ENCODE measurements at regions of chr17 and their contacts with region 1.

Region 1: GRCh38 chr17:76515274-76515949 is 14.2 kb upstream of the RHBDF2 start:
- DNase-seq: peak; percentile 72 to 99 (median 84)
- ATAC-seq: peak; percentile 82
- H3K4me3 ChIP-seq: peak overlapping the region; percentile 32 to 44
- H3K4me3 Mint-ChIP-seq: peak overlapping the region; percentile 67
- H3K27ac ChIP-seq: peak overlapping the region; percentile 85 to 92
- H3K27ac Mint-ChIP-seq: peak overlapping the region; percentile 97
- H3K4me1 ChIP-seq: peaks cover 43% of the 10 kb centered on the region
- H3K4me1 Mint-ChIP-seq: peaks cover 49% of the 10 kb centered on the region
- H3K27me3 ChIP-seq: no peaks in the 10 kb centered on the region
- H3K27me3 Mint-ChIP-seq: no peaks in the 10 kb centered on the region
- CTCF ChIP-seq: no peak

Region 2: GRCh38 chr17:76314392-76315227 is 200.8 kb before region 1 on chr17:
- CTCF ChIA-PET with region 1: no interaction called
- POLR2A ChIA-PET with region 1: no interaction called
- intact Hi-C with region 1: no loop called
- DNase-seq: no peak
- ATAC-seq: no peak
- H3K4me3 ChIP-seq: no peak overlapping the region
- H3K4me3 Mint-ChIP-seq: no peak overlapping the region
- H3K27ac ChIP-seq: no peak overlapping the region
- H3K27ac Mint-ChIP-seq: no peak overlapping the region
- H3K4me1 ChIP-seq: no peaks in the 10 kb centered on the region
- H3K4me1 Mint-ChIP-seq: no peaks in the 10 kb centered on the region
- H3K27me3 ChIP-seq: no peaks in the 10 kb centered on the region
- H3K27me3 Mint-ChIP-seq: no peaks in the 10 kb centered on the region
- CTCF ChIP-seq: no peak

Region 3: DNA sequence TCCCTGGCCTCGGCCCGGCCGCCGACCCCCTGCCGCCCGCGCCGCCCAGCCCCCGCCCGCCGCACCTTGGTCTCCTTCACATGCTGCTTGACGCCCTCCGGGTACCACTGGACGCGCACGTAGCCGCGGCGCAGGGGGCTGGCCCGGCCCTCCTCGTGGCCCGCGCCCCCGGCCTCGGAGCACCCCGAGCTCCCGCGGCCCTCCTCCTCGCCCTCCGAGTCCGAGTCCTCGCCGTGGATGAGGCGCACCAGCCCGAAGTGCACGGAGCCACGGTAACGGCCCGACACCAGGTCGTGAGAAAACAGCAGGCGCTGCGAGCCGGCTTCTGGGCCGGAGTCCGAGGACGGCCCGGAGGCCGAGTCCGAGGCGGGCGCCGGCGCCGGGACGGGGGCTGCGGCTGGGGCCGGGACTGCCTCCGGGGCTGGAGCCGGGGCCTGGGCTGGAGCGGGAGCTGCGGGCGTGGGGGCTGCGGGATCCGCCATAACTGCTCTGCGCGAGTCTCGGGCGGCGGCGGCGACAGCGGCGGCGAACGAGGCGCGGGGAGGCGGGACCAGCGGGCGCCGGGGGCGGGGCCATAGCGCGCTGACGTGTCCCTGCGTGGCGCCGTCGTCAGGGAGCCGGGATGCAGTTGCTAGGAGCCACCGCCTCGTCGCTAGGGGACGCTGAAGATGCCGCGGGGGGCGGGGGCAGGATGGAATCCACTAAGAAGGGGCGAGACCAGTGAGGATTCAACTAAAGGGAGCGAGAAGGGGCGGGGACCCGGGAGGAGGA is 62.6 kb before region 1 on chr17 and contains the start of gene UBE2O:
- CTCF ChIA-PET with region 1: interaction called, 7 read pairs
- POLR2A ChIA-PET with region 1: interaction called, 4 read pairs
- intact Hi-C with region 1: loop called (anchors 1 to 2 kb)
- DNase-seq: peak; percentile 84 to 96 (median 94)
- ATAC-seq: peak; percentile 92
- H3K4me3 ChIP-seq: peak within 1 kb of the TSS; percentile 49 to 78
- H3K4me3 Mint-ChIP-seq: peak within 1 kb of the TSS; percentile 85
- H3K27ac ChIP-seq: peak within 1 kb of the TSS; percentile 50 to 64
- H3K27ac Mint-ChIP-seq: peak within 1 kb of the TSS; percentile 78
- H3K4me1 ChIP-seq: peaks cover 22% of the 10 kb centered on the region
- H3K4me1 Mint-ChIP-seq: peaks cover 39% of the 10 kb centered on the region
- H3K27me3 ChIP-seq: no peaks in the 10 kb centered on the region
- H3K27me3 Mint-ChIP-seq: no peaks in the 10 kb centered on the region
- CTCF ChIP-seq: peak; percentile 39
- total RNA-seq, gene UBE2O: 29.8 to 32.7 TPM

Region 4: GRCh38 chr17:76492989-76493501 is 22.4 kb before region 1 on chr17:
- CTCF ChIA-PET with region 1: no interaction called
- POLR2A ChIA-PET with region 1: interaction called, 11 read pairs
- intact Hi-C with region 1: no loop called
- DNase-seq: peak in 6 of 9 experiments; percentile 19 to 78 (median 49)
- ATAC-seq: peak; percentile 38
- H3K4me3 ChIP-seq: peak overlapping the region; percentile 41 to 42
- H3K4me3 Mint-ChIP-seq: peak overlapping the region; percentile 80
- H3K27ac ChIP-seq: peak overlapping the region; percentile 60 to 91
- H3K27ac Mint-ChIP-seq: peak overlapping the region; percentile 93
- H3K4me1 ChIP-seq: peaks cover 40% of the 10 kb centered on the region
- H3K4me1 Mint-ChIP-seq: peaks cover 42% of the 10 kb centered on the region
- H3K27me3 ChIP-seq: no peaks in the 10 kb centered on the region
- H3K27me3 Mint-ChIP-seq: no peaks in the 10 kb centered on the region
- CTCF ChIP-seq: no peak

Region 5: DNA sequence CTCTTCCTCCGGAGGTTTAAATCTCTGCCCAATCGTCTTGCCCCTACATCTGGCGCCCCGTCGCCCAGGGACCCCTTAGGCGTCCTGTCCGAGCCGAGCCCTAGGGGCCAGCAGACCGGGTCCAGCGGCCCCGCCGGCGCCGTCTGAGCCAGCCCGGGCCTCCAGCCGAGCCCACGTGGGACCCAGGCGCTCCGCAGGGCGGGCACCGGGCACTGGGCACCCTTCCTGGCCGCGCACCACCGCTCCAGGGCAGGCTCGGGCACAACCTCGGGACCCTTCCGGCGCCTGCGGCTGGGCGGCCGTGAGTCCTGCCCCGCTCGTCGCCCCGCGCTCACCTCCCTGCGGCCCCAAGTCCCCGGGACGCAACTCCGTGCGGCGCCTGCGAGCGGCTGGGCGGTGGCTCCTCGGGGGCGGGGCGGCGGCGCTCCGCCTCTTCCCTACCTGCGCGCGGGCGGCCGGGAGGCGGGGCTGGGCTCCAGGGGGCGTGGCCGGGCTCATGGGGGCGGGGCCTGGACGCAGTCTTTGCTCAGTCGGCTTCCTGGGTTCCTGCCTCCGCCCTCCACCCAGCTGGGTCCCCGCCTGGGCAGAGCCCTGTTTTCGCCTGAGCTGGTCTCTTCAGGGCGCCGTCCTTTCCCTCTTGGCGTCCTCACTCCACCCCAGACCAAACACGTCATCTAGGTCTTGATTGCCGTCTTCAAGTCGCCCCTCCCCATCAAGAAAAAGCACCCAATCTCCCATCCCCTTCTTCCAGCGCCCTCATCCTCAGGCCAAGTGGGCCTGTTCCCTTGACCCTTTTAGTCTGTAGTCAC is 14.2 kb before region 1 on chr17 and contains the start of gene RHBDF2:
- CTCF ChIA-PET with region 1: interaction called, 71 read pairs
- POLR2A ChIA-PET with region 1: interaction called, 5 read pairs
- intact Hi-C with region 1: loop called in 1 of 2 experiments (anchors 1 kb)
- DNase-seq: peak; percentile 91 to 99 (median 96)
- ATAC-seq: peak; percentile 97
- H3K4me3 ChIP-seq: peak within 1 kb of the TSS; percentile 79 to 93
- H3K4me3 Mint-ChIP-seq: peak within 1 kb of the TSS; percentile 83
- H3K27ac ChIP-seq: peak within 1 kb of the TSS; percentile 73 to 85
- H3K27ac Mint-ChIP-seq: peak within 1 kb of the TSS; percentile 96
- H3K4me1 ChIP-seq: peaks cover 44% of the 10 kb centered on the region
- H3K4me1 Mint-ChIP-seq: peaks cover 47% of the 10 kb centered on the region
- H3K27me3 ChIP-seq: no peaks in the 10 kb centered on the region
- H3K27me3 Mint-ChIP-seq: no peaks in the 10 kb centered on the region
- CTCF ChIP-seq: no peak
- total RNA-seq, gene RHBDF2: 45.4 to 46.2 TPM

Region 6: DNA sequence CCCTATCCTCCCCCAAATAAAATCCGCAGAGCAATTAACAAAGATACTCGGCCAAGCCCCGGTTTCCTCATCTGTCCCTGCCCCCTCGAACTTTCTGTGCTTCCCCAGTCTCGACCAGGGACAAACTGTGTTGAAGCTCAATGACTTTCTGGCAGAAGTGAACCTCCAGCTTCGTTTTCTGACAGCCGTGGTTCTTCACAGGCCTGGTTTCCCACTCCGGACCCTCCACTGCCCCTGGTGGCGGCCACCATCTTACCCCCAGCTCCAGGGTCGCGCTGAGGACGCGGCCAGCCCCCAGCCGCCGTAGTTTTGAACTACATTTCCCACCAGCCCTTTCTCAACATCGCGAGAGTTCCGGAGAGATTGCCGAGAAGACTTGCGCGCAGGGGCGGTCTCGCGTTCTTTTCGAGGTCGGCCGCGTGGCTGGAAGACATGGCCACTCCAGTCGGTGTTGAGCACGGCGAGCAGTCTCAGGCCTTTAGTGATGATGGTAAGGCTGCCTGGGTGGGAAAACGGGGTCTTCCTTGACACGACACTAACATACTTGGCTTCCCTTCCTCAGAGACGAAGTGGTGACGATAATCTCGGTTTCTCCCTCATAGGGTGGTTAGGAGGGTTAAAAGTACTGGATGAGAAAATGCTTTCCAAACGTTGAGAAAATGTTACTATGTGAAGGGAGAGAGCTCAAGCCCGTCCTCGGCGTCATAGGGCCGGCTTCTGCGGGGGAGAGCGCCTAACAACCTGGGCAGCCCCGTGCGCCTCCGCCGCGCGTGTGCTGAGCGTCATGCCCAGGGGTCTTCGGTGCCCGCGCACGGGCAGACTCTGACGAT is 42.2 kb after region 1 on chr17:
- CTCF ChIA-PET with region 1: interaction called, 6 read pairs
- POLR2A ChIA-PET with region 1: interaction called, 6 read pairs
- intact Hi-C with region 1: loop called (anchors 1 kb)
- DNase-seq: peak; percentile 86 to 97 (median 92)
- ATAC-seq: peak; percentile 78
- H3K4me3 ChIP-seq: peak overlapping the region; percentile 70 to 75
- H3K4me3 Mint-ChIP-seq: peak overlapping the region; percentile 95
- H3K27ac ChIP-seq: peak overlapping the region; percentile 81 to 95
- H3K27ac Mint-ChIP-seq: peak overlapping the region; percentile 97
- H3K4me1 ChIP-seq: peaks cover 49% of the 10 kb centered on the region
- H3K4me1 Mint-ChIP-seq: peaks cover 63% of the 10 kb centered on the region
- H3K27me3 ChIP-seq: no peaks in the 10 kb centered on the region
- H3K27me3 Mint-ChIP-seq: no peaks in the 10 kb centered on the region
- CTCF ChIP-seq: peak; percentile 35

Region 7: GRCh38 chr17:76671123-76671911 is 155.9 kb after region 1 on chr17:
- CTCF ChIA-PET with region 1: no interaction called
- POLR2A ChIA-PET with region 1: interaction called, 12 read pairs
- intact Hi-C with region 1: loop called in 1 of 2 experiments (anchors 5 kb)
- DNase-seq: peak; percentile 96 to 100 (median 99)
- ATAC-seq: peak; percentile 97
- H3K4me3 ChIP-seq: peak overlapping the region; percentile 76 to 79
- H3K4me3 Mint-ChIP-seq: peak overlapping the region; percentile 90
- H3K27ac ChIP-seq: peak overlapping the region; percentile 71 to 90
- H3K27ac Mint-ChIP-seq: peak overlapping the region; percentile 96
- H3K4me1 ChIP-seq: peaks cover 39% of the 10 kb centered on the region
- H3K4me1 Mint-ChIP-seq: peaks cover 49% of the 10 kb centered on the region
- H3K27me3 ChIP-seq: no peaks in the 10 kb centered on the region
- H3K27me3 Mint-ChIP-seq: no peaks in the 10 kb centered on the region
- CTCF ChIP-seq: no peak

Region 8: DNA sequence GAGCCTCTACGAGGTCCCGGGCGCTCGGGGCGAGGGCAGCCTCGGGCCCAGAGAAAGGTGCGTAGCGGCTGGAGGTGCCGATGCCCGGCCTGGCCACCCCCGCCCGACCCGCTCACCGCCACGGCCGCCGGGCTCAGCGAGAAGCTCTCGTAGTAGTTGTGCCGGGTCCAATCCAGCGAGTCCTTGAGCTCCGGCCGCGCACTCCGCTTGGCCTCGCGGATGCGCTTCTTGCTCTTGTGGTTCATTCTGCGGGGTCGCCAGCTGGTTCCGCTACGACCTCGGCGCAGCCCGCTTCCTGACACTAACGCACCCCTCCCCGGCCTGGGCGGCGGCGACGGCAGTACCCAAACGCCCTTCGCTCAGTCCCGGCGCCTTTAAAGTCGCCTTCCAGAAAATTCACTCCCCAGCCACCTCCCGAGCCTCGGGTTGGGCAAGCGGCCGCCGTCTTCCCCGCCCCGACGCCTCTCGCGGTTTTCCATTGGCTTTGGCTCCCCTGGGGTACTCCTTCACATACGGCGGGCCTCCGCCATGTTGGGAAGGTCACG is 210.9 kb after region 1 on chr17 and contains the start of gene JMJD6:
- CTCF ChIA-PET with region 1: no interaction called
- POLR2A ChIA-PET with region 1: no interaction called
- intact Hi-C with region 1: loop called in 1 of 2 experiments (anchors 1 kb)
- DNase-seq: peak in 5 of 9 experiments; percentile 88 to 95 (median 93)
- ATAC-seq: peak; percentile 77
- H3K4me3 ChIP-seq: peak within 1 kb of the TSS; percentile 87 to 92
- H3K4me3 Mint-ChIP-seq: peak within 1 kb of the TSS; percentile 99
- H3K27ac ChIP-seq: peak within 1 kb of the TSS; percentile 98 to 99
- H3K27ac Mint-ChIP-seq: peak within 1 kb of the TSS; percentile 99
- H3K4me1 ChIP-seq: peaks cover 46% of the 10 kb centered on the region
- H3K4me1 Mint-ChIP-seq: peaks cover 57% of the 10 kb centered on the region
- H3K27me3 ChIP-seq: no peaks in the 10 kb centered on the region
- H3K27me3 Mint-ChIP-seq: no peaks in the 10 kb centered on the region
- CTCF ChIP-seq: no peak
- total RNA-seq, gene JMJD6: 316 to 336 TPM

Measured in CD8-positive, alpha-beta T cell (primary cell).